Panc1 (cell line): ENCODE measurements at regions of chrX and their contacts with region 1.

Region 1: GRCh38 chrX:133574716-133575115 is 159.4 kb upstream of the GPC4 start:
- DNase-seq: no peak
- ATAC-seq: no peak
- H3K4me3 ChIP-seq: no peak overlapping the region
- H3K27ac ChIP-seq: no peak overlapping the region
- H3K4me1 ChIP-seq: no peaks in the 10 kb centered on the region
- H3K27me3 ChIP-seq: no peaks in the 10 kb centered on the region
- CTCF ChIP-seq: no peak

Region 2: GRCh38 chrX:133638285-133638684 is 63.6 kb after region 1 on chrX:
- CTCF ChIA-PET with region 1: no interaction called
- POLR2A ChIA-PET with region 1: no interaction called
- in situ Hi-C with region 1: no loop called
- intact Hi-C with region 1: loop called (anchors 5 kb)
- DNase-seq: no peak
- ATAC-seq: no peak
- H3K4me3 ChIP-seq: no peak overlapping the region
- H3K27ac ChIP-seq: no peak overlapping the region
- H3K4me1 ChIP-seq: no peaks in the 10 kb centered on the region
- H3K27me3 ChIP-seq: no peaks in the 10 kb centered on the region
- CTCF ChIP-seq: no peak

Region 3: GRCh38 chrX:133649651-133650050 is 74.9 kb after region 1 on chrX:
- CTCF ChIA-PET with region 1: no interaction called
- POLR2A ChIA-PET with region 1: no interaction called
- in situ Hi-C with region 1: no loop called
- intact Hi-C with region 1: no loop called
- DNase-seq: no peak
- ATAC-seq: no peak
- H3K4me3 ChIP-seq: no peak overlapping the region
- H3K27ac ChIP-seq: no peak overlapping the region
- H3K4me1 ChIP-seq: no peaks in the 10 kb centered on the region
- H3K27me3 ChIP-seq: no peaks in the 10 kb centered on the region
- CTCF ChIP-seq: no peak